ENCODE measurements at regions of chr21 and their contacts with region 1.

Region 1: GRCh38 chr21:45184869-45185268 is 102.8 kb downstream of the POFUT2 start:
- DNase-seq: no peak
- ATAC-seq: no peak
- H3K4me3 Mint-ChIP-seq: no peak overlapping the region
- H3K27ac Mint-ChIP-seq: no peak overlapping the region
- H3K4me1 Mint-ChIP-seq: no peaks in the 10 kb centered on the region
- H3K27me3 Mint-ChIP-seq: no peaks in the 10 kb centered on the region
- CTCF ChIP-seq: no peak

Region 2: DNA sequence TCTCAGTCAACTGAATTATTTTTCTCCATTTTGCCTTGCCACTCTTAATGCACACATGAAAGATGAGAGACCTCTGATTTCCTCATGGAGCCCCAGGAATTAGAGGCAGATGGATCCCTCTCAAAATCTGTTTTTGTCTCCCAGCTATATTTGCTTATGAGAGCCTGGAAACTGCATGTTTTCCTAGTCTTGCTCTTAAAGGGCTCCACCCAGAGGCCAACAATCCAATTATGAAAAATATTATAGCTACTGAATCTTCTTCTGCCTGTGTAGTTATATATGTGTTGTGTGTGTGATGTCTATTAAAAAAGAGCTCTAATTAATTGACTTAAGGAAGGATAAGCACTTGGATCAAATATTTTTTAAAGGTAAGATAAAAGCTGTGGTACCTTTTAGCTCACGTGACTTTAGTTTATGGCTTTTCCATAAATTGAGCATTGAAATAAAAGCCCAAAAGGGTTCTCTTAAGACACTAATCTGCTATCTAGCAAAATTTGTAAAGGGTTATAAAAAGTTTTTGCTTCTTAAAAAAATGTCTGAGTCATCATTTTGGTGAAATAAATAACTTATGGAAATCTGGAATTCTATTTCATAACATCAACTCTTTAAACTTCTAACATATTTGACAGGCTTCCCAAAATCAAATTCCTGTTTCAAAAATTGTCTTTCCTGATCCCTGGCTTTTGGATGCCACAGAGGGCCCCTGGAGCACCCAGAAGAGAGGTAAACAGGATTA is 442.3 kb before region 1 on chr21:
- CTCF ChIA-PET with region 1: no interaction called
- POLR2A ChIA-PET with region 1: no interaction called
- intact Hi-C with region 1: no loop called
- DNase-seq: no peak
- ATAC-seq: no peak
- H3K4me3 Mint-ChIP-seq: no peak overlapping the region
- H3K27ac Mint-ChIP-seq: no peak overlapping the region
- H3K4me1 Mint-ChIP-seq: no peaks in the 10 kb centered on the region
- H3K27me3 Mint-ChIP-seq: no peaks in the 10 kb centered on the region
- CTCF ChIP-seq: no peak

Region 3: GRCh38 chr21:45169001-45169400 is 15.9 kb before region 1 on chr21:
- CTCF ChIA-PET with region 1: no interaction called
- POLR2A ChIA-PET with region 1: interaction called, 10 read pairs
- intact Hi-C with region 1: no loop called
- DNase-seq: no peak
- ATAC-seq: no peak
- H3K4me3 Mint-ChIP-seq: no peak overlapping the region
- H3K27ac Mint-ChIP-seq: no peak overlapping the region
- H3K4me1 Mint-ChIP-seq: peaks cover 6% of the 10 kb centered on the region
- H3K27me3 Mint-ChIP-seq: no peaks in the 10 kb centered on the region
- CTCF ChIP-seq: no peak